ENCODE measurements at regions of chr10 and their contacts with region 1.

Region 1: DNA sequence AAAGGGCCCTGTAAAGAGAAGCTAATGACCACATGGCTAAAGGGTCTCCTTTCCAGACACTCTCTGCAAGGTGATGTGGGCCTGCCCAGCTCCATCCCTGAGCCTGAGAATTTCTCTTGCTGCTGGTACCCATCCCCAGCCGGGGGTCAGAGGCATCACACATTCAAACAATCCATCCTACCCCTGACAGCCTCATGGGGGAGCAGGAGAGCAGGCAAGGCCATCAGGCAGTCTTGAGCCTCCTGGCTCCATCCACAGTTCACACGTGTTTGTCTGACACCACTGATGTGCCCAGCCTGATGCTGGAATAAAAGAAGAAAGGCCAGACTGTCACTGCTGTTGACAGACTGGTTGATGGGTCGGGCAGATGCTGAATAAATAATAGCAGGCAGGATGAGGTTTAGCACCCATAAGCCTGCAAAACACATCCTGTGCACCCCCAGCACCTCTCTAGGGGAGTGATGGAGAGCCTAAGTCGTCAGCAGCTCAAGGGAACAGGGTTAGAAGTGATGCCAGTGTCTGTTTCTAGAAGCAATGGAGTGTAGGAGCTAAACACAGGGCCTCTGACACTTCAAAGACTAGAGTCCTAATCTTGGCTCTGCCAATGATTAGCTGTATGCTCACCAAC is 43.5 kb downstream of the TLL2 start:
- DNase-seq: peak; percentile 73
- ATAC-seq: peak; percentile 95
- H3K4me3 Mint-ChIP-seq: no peak overlapping the region
- H3K27ac Mint-ChIP-seq: no peak overlapping the region
- H3K4me1 Mint-ChIP-seq: peaks cover 27% of the 10 kb centered on the region
- H3K27me3 Mint-ChIP-seq: no peaks in the 10 kb centered on the region
- CTCF ChIP-seq: peak; percentile 46

Region 2: DNA sequence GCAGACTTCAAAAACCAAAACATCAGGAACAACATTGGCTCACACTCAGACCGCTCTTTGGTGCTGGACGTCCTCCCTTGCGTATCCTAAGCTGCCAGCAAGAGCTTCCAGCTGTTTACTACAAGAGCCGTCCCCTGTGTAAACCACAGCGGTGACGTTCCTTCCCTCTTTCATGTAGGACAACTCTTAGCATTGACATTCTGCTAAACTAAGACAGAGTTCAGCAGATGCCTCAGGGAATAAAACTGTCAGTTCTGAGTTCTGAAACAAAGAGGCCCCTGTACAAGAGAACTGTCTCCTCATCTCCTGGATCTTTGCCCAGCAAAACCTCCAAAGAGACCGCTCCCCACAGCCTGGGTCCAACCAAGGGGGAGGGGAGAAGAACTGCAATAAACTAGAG is 53.6 kb before region 1 on chr10:
- CTCF ChIA-PET with region 1: interaction called, 11 read pairs
- POLR2A ChIA-PET with region 1: no interaction called
- DNase-seq: no peak
- ATAC-seq: no peak
- H3K4me3 Mint-ChIP-seq: no peak overlapping the region
- H3K27ac Mint-ChIP-seq: no peak overlapping the region
- H3K4me1 Mint-ChIP-seq: peaks cover 8% of the 10 kb centered on the region; the same call in 1 of the 2 replicates
- H3K27me3 Mint-ChIP-seq: no peaks in the 10 kb centered on the region
- CTCF ChIP-seq: no peak

Region 3: GRCh38 chr10:96450529-96451207 is 19.6 kb before region 1 on chr10:
- CTCF ChIA-PET with region 1: interaction called, 22 read pairs
- POLR2A ChIA-PET with region 1: no interaction called
- DNase-seq: peak; percentile 69
- ATAC-seq: peak; percentile 91
- H3K4me3 Mint-ChIP-seq: peak overlapping the region; percentile 57
- H3K27ac Mint-ChIP-seq: peak overlapping the region; percentile 100
- H3K4me1 Mint-ChIP-seq: peaks cover 80% of the 10 kb centered on the region
- H3K27me3 Mint-ChIP-seq: no peaks in the 10 kb centered on the region
- CTCF ChIP-seq: no peak